ENCODE measurements at regions of chr2 and their contacts with region 1.

Region 1: GRCh38 chr2:85547089-85547858 is 8.3 kb downstream of the MAT2A start:
- DNase-seq: no peak
- ATAC-seq: no peak
- H3K4me3 ChIP-seq: no peak overlapping the region
- H3K27ac ChIP-seq: no peak overlapping the region
- H3K4me1 ChIP-seq: peaks cover 13% of the 10 kb centered on the region
- H3K27me3 ChIP-seq: no peaks in the 10 kb centered on the region
- CTCF ChIP-seq: no peak

Region 2: DNA sequence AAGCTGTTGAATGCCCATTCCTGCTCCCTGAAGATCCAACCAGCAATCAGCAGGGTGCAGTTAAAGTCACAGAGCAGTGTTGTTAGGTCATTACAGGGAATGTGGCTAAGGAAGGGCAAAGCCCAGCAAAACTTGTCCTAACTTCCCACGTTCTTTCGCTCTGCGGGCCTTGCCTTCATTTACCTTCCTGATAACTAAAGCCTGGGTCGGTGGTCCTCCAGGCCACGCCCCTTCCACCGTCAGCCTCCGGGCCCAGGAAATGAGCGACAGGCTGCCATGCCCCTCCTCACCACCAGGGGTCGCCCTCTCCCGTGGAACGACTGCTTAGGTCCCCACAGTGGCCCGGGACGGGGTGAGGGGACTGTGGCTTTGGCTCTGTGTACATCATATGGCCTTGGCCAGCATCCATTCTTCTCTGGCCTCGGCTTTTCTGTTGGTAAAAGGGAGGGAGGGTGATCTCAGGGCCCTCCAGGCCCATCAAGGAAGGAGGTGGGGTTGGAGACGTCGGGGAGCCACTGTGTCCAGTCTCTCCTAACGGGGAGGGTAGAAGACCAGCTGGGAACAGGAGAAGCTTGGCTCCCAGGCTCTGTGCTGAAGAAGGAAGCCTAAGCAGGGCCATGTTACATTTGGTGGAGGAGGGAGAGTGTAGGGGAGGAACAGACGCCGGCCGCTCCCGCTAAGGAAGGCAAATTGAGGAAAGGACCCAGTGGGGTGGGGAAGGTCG is 126.6 kb before region 1 on chr2:
- intact Hi-C with region 1: loop called (anchors 2 kb)
- DNase-seq: peak; percentile 95
- ATAC-seq: peak; percentile 91
- H3K4me3 ChIP-seq: peak overlapping the region; percentile 5
- H3K27ac ChIP-seq: peak overlapping the region; percentile 96
- H3K4me1 ChIP-seq: peaks cover 31% of the 10 kb centered on the region
- H3K27me3 ChIP-seq: no peaks in the 10 kb centered on the region
- CTCF ChIP-seq: peak; percentile 100

Measured in upper lobe of right lung (tissue), 1 donor.